OCI-LY7 (cell line): ENCODE measurements at regions of chr6 and their contacts with region 1.

Region 1: DNA sequence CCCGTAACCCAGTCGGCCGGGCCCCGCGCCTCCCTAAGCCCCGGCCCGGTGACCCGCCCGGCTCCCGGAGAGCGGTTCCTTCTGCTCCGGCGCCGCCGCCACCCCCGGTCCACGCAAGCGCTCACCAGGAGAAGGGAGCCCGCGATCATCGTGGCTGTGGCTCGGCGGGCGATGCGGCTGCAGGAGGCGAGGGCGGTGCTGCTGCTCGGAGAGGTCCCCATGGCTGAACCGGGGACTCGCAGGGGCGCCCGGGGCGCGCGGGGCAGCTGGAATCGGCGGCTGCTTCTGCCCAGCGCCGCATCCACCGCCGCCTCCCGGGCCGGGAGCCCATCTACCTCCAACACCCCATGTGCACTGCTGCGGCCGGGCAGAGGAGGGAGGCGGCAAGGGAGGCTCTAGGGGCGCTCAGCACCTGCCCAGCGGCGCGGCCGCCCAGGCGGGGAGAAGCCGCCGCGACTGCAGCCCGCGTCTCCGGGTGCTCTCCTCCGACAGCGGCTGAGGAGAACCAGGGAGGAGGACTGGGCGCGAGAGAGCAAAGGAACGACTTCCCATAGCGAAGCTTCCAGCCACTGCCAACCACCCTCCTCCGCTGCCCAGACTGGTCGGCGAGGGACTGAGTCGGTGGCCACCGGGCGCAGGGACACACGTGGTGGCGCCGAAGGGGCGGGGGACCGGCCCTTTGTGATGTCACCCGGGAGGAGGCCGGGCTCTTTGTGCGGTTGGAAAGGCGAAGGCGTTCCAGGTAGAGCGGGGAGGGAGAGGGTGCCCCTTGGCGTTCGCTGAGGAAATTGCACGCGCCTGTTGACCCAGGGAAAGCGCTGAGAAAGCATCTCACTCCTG is at the start of gene TNFRSF21:
- DNase-seq: peak; percentile 93
- H3K4me3 ChIP-seq: peak within 1 kb of the TSS; percentile 95
- H3K27ac ChIP-seq: peak within 1 kb of the TSS; percentile 62
- H3K4me1 ChIP-seq: peaks cover 46% of the 10 kb centered on the region
- CTCF ChIP-seq: peak; percentile 86
- total RNA-seq, gene TNFRSF21: 22.7 and 28.1 TPM in 2 replicates

Region 2: DNA sequence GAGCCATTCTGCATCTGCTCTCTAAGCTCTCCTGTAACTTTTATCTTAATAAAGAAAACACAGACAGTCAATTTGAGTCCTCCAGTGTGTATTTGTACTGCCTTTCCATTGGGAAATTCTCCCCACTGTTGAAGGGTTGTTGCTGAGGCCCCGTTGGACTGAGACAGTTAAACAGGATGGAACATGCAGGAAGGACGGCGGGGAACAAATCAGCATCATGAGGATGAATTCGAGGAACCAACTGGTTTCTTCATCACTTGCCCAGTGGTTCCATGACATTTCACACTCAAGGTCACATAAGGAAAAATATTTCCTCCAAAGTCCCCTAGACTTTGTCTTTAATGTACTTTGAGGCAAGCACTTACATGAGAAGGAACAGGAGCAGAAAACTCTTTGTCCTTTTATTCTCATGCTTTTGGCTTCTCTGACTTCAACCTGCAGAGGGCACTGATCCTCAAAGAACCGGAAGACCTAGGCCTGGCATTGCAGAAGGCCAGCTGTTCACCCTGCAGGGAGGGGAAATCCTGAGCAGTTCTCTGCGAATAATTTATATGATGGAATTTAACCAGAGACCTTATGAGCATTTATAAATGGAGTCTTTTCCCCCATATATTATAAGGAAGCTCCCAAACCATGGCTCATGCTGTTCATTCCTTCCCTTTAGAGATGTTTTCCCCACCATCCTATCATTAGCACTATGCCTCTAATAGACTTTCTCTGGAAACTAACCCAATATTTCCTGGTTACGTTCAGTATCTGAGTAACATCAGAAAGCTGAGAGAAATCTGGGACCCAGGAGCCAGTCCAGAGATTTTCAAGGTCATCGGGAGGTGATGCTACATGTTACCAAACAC is 212.2 kb before region 1 on chr6:
- CTCF ChIA-PET with region 1: interaction called, 4 read pairs
- POLR2A ChIA-PET with region 1: interaction called, 13 read pairs
- intact Hi-C with region 1: loop called (anchors 1 kb)
- DNase-seq: peak; percentile 90
- H3K4me3 ChIP-seq: no peak overlapping the region
- H3K27ac ChIP-seq: no peak overlapping the region
- H3K4me1 ChIP-seq: peaks cover 15% of the 10 kb centered on the region
- CTCF ChIP-seq: peak; percentile 97

Region 3: DNA sequence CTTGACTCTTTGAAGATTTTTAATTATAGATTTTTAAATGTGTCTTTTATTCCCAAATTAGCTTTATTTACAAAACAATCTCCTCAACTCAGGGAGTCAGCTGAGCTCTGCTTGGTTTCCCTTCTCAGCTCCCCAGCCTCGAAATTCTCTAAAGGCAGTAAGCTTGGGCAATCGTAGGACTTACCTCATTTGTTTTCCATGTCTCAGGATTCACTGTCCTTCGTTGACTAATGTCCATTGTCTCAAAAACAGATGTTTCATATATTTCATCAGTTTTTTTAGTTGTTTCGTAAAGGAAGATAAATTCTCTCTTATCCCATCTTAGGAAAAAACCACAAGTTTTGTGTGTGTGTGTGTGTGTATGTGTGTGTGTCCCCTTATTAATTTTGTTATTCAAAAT is 165.2 kb before region 1 on chr6:
- CTCF ChIA-PET with region 1: no interaction called
- POLR2A ChIA-PET with region 1: no interaction called
- intact Hi-C with region 1: no loop called
- DNase-seq: no peak
- H3K4me3 ChIP-seq: no peak overlapping the region
- H3K27ac ChIP-seq: no peak overlapping the region
- H3K4me1 ChIP-seq: peaks cover 11% of the 10 kb centered on the region
- CTCF ChIP-seq: no peak